Transverse colon (tissue), 4 donors: ENCODE measurements at regions of chr14 and their contacts with region 1.

Region 1: DNA sequence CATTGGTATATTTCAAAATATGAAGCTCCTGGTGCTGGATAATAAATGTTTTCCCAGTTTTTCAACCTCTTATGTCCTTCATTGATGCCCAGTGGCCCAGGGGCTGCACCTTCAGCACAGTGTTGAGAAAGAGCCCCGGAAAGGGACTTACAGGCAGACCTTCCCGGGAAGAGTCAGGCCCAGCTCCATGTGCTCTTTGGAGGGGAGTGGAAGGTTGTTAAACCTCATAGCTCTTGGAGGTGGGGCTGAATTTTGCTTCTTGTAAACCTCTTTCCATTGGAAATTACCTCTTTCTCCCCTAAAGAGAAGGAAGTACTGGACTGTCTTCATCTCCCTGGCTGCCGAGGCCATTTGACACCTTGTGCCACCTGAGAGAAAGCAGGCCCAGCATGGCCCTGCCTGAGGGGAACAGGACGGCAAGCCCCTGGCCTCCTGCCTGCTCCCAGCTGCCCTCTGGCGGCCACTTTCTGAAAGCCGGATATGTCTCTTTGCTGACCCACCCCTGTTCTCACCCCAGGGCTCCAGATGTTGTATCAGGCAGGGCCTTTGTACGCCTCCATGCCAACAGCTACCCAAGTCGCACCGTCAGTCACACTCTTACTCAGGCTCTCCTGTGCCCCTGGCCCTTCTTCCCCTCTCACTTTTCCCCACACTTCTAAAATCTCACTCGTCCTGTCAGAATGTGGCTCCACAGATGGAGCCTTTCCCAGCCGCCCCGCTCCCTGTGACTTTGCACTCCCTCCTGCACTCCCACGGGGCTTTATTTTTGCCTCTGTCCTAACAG is 43.0 kb downstream of the EVL start:
- DNase-seq: peak; percentile 89
- H3K4me3 ChIP-seq: no peak overlapping the region
- H3K27ac ChIP-seq: no peak overlapping the region
- H3K4me1 ChIP-seq: peaks cover 13 to 47% (median 28%) of the 10 kb centered on the region in 4 donors
- H3K27me3 ChIP-seq: no peaks in the 10 kb centered on the region
- CTCF ChIP-seq: peak; percentile 81 to 86 (median 85)
- EP300 ChIP-seq: no peak
- POLR2A ChIP-seq: no peak

Region 2: GRCh38 chr14:100033347-100034075 is 74.7 kb before region 1 on chr14:
- in situ Hi-C with region 1: no loop called
- intact Hi-C with region 1: loop called (anchors 1 kb)
- DNase-seq: no peak
- H3K4me3 ChIP-seq: no peak overlapping the region
- H3K27ac ChIP-seq: no peak overlapping the region
- H3K4me1 ChIP-seq: peaks cover 2 to 31% (median 9%) of the 10 kb centered on the region in 4 donors
- H3K27me3 ChIP-seq: peaks cover 2% of the 10 kb centered on the region
- CTCF ChIP-seq: no peak
- EP300 ChIP-seq: no peak
- POLR2A ChIP-seq: no peak

Region 3: DNA sequence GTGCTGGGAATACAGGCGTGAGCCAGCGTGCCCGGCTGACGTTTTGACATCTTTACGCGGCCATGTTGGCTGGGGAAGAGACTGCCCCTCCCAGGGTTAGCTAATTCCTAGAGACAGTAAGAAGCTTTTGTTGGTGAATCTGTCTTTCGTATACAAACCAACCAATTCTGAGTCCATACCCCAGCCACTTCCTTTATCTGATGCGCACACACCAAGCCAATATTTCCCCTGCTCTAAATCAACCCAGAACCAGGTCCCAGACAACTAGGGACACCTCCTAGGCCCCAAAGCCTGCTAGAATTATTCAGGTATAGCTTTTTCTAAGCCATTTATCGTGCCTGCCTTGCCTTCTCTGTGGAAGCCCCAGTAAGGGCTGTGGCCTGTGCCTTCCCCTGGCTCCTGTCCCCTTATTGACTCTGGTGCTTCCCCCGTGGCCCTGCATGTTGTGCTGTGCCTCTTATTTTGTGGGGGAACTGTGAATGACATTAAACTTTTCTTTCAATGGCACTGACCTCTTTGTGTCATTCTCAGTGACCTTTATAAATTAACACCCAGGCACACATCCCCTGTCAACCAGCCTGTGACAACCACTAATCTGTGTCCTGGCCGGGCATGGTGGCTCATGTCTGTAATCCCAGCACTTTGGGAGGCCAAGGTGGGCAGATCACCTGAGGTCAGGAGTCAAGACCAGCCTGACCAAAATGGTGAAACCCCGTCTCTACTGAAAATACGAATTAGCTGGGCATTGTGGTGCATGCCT is 53.7 kb before region 1 on chr14:
- in situ Hi-C with region 1: no loop called
- intact Hi-C with region 1: loop called (anchors 5 kb)
- DNase-seq: no peak
- H3K4me3 ChIP-seq: no peak overlapping the region
- H3K27ac ChIP-seq: no peak overlapping the region
- H3K4me1 ChIP-seq: peaks cover 0 to 14% (median 0%) of the 10 kb centered on the region in 4 donors
- H3K27me3 ChIP-seq: no peaks in the 10 kb centered on the region
- CTCF ChIP-seq: no peak
- EP300 ChIP-seq: no peak
- POLR2A ChIP-seq: no peak